Lower lobe of right lung (tissue), 2 donors: ENCODE measurements at regions of chr19 and their contacts with region 1.

Region 1: GRCh38 chr19:46839752-46840135 is 10.9 kb downstream of the AP2S1 start:
- DNase-seq: no peak
- ATAC-seq: peak; percentile 14 to 19
- H3K4me3 ChIP-seq: no peak overlapping the region
- H3K27ac ChIP-seq: no peak overlapping the region
- H3K4me1 ChIP-seq: peaks cover 14% of the 10 kb centered on the region
- H3K27me3 ChIP-seq: no peaks in the 10 kb centered on the region
- CTCF ChIP-seq: no peak

Region 2: DNA sequence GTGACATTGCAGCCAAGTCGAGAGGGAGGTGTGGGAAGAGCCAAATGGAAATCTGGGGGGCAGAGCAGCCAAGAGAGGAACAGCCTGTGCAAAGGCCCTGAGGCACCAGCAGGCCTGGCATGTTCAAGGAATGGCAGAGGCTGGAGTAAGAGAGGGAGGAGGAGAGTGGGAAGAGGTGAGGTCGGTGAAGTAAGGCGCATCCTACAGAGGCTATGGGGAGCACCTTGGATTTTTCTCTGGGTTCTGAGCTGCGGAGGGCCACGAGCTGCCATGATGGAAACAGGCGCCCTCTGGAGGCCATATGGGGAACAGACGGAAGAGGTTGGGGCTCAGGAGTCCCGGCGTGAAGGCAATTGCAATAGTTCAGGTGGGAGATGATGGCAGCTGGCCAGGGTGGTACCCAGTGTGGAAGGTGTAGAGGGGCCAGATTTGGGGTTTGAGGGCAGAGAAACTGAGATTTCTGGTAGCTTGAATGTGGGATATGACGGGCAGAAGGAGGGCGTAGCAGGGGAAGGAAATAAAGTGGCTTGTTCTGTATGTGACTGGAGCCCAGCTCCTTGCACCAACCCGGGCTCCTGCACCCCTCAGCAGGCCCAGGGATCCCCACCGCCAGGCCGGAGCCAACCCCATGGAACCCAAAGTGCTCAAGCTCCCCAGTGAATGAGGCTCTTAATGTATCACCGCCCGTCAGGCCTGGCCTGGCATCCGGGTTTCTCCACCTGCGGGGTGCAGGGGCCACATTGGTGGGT is 73.0 kb before region 1 on chr19:
- intact Hi-C with region 1: loop called (anchors 10 kb)
- DNase-seq: peak; percentile 74
- ATAC-seq: peak; percentile 72 to 73
- H3K4me3 ChIP-seq: no peak overlapping the region
- H3K27ac ChIP-seq: no peak overlapping the region
- H3K4me1 ChIP-seq: peaks cover under 1% of the 10 kb centered on the region
- H3K27me3 ChIP-seq: no peaks in the 10 kb centered on the region
- CTCF ChIP-seq: peak; percentile 77